ENCODE measurements at regions of chr3 and their contacts with region 1.

Region 1: GRCh38 chr3:157532529-157533297 is 29.5 kb upstream of the VEPH1 start:
- DNase-seq: peak in 5 of 7 donors; percentile 38 to 55 (median 50)
- H3K4me3 ChIP-seq: no peak overlapping the region
- H3K27ac ChIP-seq: peak overlapping the region in 1 of 5 donors; percentile 14
- H3K4me1 ChIP-seq: peaks cover 7 to 22% of the 10 kb centered on the region in 2 donors
- H3K27me3 ChIP-seq: no peaks in the 10 kb centered on the region
- CTCF ChIP-seq: peak; percentile 66 to 94 (median 85)
- POLR2A ChIP-seq: no peak

Region 2: DNA sequence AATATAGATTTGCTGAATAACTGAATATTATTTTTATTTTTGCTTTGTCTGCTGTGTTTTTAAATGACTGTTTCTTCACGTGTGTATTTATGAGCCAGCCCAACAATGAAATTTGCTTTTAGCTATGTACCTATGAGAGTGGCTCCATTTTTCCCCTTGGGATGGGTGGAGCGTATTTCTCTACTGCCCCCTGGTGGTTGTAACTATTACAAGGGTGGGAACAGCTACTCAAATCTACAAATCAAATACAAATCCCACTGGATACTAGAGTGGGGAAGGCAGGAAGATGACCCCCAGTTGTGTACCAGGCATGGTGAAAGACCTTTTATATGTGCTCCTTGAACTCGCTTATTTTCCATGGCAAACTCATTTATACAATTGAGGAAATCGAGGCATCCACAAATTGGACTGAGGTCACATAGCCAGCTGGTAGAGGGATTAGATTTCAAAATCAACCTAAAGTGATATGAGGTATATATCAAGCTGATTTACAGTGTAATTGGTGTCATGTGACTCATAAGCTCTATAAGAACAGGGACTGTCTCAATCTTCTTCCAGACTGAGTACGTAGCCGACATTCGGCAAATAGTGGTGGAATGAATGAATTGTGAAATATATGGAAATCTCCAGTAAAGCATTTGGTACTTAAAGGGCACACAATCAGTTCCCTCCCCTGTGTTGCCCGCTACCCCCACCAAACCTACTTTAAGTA is 40.0 kb after region 1 on chr3:
- intact Hi-C with region 1: loop called (anchors 2 to 5 kb)
- DNase-seq: peak; percentile 35 to 67 (median 47)
- H3K4me3 ChIP-seq: no peak overlapping the region
- H3K27ac ChIP-seq: no peak overlapping the region
- H3K4me1 ChIP-seq: no peaks in the 10 kb centered on the region
- H3K27me3 ChIP-seq: no peaks in the 10 kb centered on the region
- CTCF ChIP-seq: peak; percentile 78 to 93 (median 81)
- POLR2A ChIP-seq: no peak

Measured in adrenal gland (tissue), 19 donors.